IMR-90 (cell line): ENCODE measurements at regions of chr17 and their contacts with region 1.

Region 1: GRCh38 chr17:38358586-38359513 is 7.2 kb downstream of the SOCS7 start:
- DNase-seq: no peak
- ATAC-seq: 0 out of 2 replicates have a peak, but pooled peaks have one; percentile 11
- H3K4me3 ChIP-seq: no peak overlapping the region
- H3K27ac ChIP-seq: no peak overlapping the region
- H3K4me1 ChIP-seq: peaks cover 4% of the 10 kb centered on the region
- H3K27me3 ChIP-seq: no peaks in the 10 kb centered on the region
- CTCF ChIP-seq: no peak
- POLR2A ChIP-seq: no peak
- RAD21 ChIP-seq: no peak

Region 2: DNA sequence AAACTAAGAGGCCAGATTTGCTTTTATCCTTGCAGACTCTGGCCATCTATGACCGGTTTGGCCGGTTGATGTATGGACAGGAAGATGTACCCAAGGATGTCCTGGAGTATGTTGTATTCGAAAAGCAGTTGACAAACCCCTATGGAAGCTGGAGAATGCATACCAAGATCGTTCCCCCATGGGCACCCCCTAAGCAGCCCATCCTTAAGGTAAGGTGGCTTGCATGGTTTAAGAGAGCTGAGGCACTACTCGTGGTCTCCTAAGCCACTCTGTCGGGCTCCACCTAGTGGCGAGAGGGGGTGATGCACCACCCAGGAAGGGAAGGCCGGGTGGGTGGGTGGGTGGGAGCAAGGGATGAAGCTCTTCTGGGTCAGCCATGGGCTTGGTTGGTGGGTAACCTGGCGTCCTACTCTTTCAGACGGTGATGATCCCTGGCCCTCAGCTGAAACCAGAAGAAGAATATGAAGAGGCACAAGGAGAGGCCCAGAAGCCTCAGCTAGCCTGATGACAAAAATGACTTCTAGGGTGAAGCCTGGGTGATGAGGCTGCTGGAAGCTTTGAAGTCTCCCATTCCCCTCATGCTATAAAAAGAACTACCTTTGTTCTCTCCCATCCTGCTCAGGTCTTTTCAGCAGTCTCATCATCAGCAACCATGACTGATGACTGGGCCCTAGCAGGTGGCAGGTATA is 36.6 kb before region 1 on chr17:
- CTCF ChIA-PET with region 1: no interaction called
- POLR2A ChIA-PET with region 1: no interaction called
- dilution Hi-C with region 1: no loop called
- in situ Hi-C with region 1: no loop called
- intact Hi-C with region 1: no loop called
- DNase-seq: peak; percentile 39
- ATAC-seq: peak; percentile 84
- H3K4me3 ChIP-seq: no peak overlapping the region
- H3K27ac ChIP-seq: no peak overlapping the region
- H3K4me1 ChIP-seq: peaks cover 12% of the 10 kb centered on the region
- H3K27me3 ChIP-seq: peaks cover 4% of the 10 kb centered on the region; the same call in 1 of the 2 replicates
- CTCF ChIP-seq: peak; percentile 48
- POLR2A ChIP-seq: no peak
- RAD21 ChIP-seq: peak; percentile 33

Region 3: GRCh38 chr17:38403491-38403890 is 44.6 kb after region 1 on chr17:
- CTCF ChIA-PET with region 1: no interaction called
- POLR2A ChIA-PET with region 1: no interaction called
- dilution Hi-C with region 1: no loop called
- in situ Hi-C with region 1: loop called (anchors 5 kb)
- intact Hi-C with region 1: no loop called
- DNase-seq: peak; percentile 20
- ATAC-seq: peak; percentile 67
- H3K4me3 ChIP-seq: no peak overlapping the region
- H3K27ac ChIP-seq: no peak overlapping the region
- H3K4me1 ChIP-seq: peaks cover 1% of the 10 kb centered on the region; the same call in 1 of the 2 replicates
- H3K27me3 ChIP-seq: no peaks in the 10 kb centered on the region
- CTCF ChIP-seq: no peak
- POLR2A ChIP-seq: no peak
- RAD21 ChIP-seq: no peak

Region 4: DNA sequence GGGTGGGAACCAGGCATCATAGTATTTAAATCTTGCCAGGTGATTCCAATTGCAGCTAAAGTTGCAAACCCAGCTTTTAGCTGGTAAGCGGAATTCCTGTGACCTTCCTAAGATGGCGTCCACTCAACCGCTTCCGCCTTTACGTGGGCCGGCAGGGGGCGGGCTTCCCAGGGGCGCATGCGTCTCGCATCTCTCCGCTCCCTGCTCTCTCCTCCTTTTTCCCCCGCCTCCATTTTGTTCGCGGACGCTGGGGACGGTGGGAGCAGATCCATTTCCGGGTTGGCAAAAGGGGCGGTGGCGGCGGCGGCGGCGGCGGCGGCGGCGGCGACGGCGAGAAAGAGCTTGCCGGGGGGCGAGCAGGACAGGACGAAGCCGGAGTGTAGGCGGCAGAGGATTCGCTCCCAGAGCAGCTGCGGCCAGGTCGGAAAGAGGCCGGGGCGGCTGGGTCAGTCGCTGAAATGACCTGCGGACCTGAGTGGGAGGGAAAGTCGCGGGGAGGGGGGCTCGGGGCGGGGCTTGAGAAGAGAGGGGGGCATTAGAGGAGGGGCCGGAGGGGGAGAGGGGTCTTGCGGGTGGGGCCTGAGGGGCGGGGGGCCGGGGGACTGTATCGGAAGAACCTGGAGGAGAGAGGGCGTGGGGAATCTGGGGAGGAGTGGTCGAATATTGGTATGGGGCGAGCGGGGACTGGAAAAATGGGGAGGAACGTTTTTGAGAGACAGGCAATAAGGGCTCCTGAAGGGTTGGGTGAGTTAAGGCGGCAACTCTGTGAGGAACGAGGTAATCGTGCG is 1860.4 kb after region 1 on chr17 and contains the start of gene WIPF2:
- CTCF ChIA-PET with region 1: no interaction called
- POLR2A ChIA-PET with region 1: no interaction called
- dilution Hi-C with region 1: no loop called
- in situ Hi-C with region 1: no loop called
- intact Hi-C with region 1: no loop called
- DNase-seq: peak; percentile 94
- ATAC-seq: peak; percentile 99
- H3K4me3 ChIP-seq: peak within 1 kb of the TSS; percentile 70
- H3K27ac ChIP-seq: peak within 1 kb of the TSS; percentile 91
- H3K4me1 ChIP-seq: peaks cover 5% of the 10 kb centered on the region
- H3K27me3 ChIP-seq: no peaks in the 10 kb centered on the region
- CTCF ChIP-seq: peak; percentile 70
- POLR2A ChIP-seq: peak; percentile 50; the same call in 1 of the 2 replicates
- RAD21 ChIP-seq: no peak
- total RNA-seq, gene WIPF2: 2.0 and 2.8 TPM in 2 replicates